BJ (cell line): ENCODE measurements at regions of chr12 and their contacts with region 1.

Region 1: GRCh38 chr12:6195665-6196535 is 4.3 kb upstream of the CD9 start:
- DNase-seq: no peak
- H3K4me3 ChIP-seq: no peak overlapping the region
- H3K27me3 ChIP-seq: no peaks in the 10 kb centered on the region
- CTCF ChIP-seq: peak; percentile 94

Region 2: DNA sequence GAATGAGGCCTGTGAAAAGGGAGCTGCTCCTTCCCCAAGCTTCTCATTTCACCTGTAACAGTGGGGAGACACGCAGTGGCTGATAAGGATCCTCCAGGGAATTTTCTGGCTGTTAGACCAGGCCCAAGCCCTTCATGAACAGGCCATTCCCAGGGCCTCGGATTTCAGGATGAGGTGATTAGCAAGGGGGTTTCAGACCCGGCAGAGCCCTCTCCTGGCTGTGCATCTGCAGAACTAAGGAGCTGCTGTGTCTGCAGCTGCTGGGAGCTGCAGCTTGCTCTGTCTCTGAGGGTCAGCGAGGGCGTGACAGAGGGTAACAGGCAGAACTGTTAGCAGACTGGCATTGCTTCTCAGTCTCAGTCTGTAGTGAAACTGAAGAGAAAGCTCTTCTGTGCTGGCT is 1041.8 kb before region 1 on chr12:
- CTCF ChIA-PET with region 1: no interaction called
- POLR2A ChIA-PET with region 1: no interaction called
- DNase-seq: no peak
- H3K4me3 ChIP-seq: no peak overlapping the region
- H3K27me3 ChIP-seq: peaks cover 2% of the 10 kb centered on the region
- CTCF ChIP-seq: no peak

Region 3: GRCh38 chr12:6069437-6070107 is 126.3 kb before region 1 on chr12:
- CTCF ChIA-PET with region 1: interaction called, 28 read pairs
- POLR2A ChIA-PET with region 1: no interaction called
- DNase-seq: peak; percentile 89
- H3K4me3 ChIP-seq: no peak overlapping the region
- H3K27me3 ChIP-seq: no peaks in the 10 kb centered on the region; the same call in 1 of the 2 replicates
- CTCF ChIP-seq: no peak

Region 4: GRCh38 chr12:6182116-6182898 is 13.6 kb before region 1 on chr12:
- CTCF ChIA-PET with region 1: interaction called, 28 read pairs
- POLR2A ChIA-PET with region 1: interaction called, 3 read pairs
- DNase-seq: peak; percentile 92
- H3K4me3 ChIP-seq: no peak overlapping the region
- H3K27me3 ChIP-seq: no peaks in the 10 kb centered on the region
- CTCF ChIP-seq: no peak

Region 5: DNA sequence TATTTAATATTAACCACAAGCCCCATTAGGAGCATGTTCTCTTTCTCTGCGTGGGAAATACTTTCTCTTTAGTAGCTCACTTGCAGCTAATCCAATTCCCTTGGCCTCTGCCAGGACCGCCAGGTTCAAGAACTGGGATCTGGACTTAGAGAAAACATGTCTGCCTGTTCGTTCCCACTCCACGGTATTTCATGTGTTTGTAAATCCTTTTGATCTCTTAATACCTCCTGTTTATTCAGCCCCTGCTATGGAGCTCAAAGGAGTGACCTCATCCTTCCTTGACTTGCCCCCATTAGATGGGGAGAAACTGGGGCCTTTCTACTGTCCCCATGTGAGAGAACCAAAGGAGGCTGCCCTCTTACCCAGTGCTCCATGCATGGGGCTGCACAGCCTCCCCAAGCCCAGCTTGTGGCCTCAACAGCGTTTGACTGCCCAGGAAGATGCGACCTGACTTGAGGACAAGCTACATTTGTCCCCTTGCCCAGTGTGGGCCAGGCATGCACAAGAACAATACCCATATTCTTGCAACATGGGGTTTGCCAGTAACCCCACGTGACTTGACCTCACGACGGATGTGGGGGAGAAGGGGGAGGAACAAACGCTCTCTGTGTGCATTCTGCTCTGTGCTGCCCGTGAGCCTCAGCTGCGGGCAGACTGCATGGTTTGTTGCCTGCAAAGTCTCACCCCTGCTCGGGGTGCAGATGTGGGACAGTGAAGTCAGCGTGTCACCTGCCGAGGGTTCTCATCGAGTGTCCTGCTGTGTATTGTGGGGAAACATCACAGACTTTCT is 34.6 kb after region 1 on chr12:
- CTCF ChIA-PET with region 1: interaction called, 21 read pairs
- POLR2A ChIA-PET with region 1: no interaction called
- DNase-seq: no peak
- H3K4me3 ChIP-seq: no peak overlapping the region
- H3K27me3 ChIP-seq: no peaks in the 10 kb centered on the region
- CTCF ChIP-seq: no peak

Region 6: GRCh38 chr12:6341417-6342139 is 145.7 kb after region 1 on chr12 and contains the start of gene TNFRSF1A:
- CTCF ChIA-PET with region 1: no interaction called
- POLR2A ChIA-PET with region 1: no interaction called
- DNase-seq: no peak
- H3K4me3 ChIP-seq: peak within 1 kb of the TSS; percentile 90
- H3K27me3 ChIP-seq: no peaks in the 10 kb centered on the region
- CTCF ChIP-seq: no peak
- polyA plus RNA-seq, gene TNFRSF1A: 170 and 217 TPM in 2 replicates